ENCODE measurements at regions of chr18 and their contacts with region 1.

Region 1: DNA sequence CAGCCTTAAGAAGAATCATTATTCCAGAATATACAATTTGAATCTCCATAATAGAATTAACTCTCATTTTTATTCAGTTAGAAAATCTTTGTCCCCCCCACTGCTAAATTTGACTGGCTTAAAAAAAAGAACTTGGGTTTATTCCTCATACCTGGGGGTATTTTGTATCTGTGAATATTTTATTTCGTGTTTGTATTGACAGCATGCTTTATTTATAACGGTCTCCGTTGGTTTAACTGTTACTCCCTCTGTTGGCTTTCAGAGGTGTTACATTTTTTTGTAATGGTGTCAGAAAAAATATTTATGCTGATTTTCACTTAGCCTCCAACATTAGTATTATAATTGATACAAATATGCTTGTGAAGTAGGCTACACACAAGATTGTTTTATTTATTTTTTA is 109.1 kb downstream of the HAUS1 start:
- DNase-seq: no peak
- H3K4me3 Mint-ChIP-seq: no peak overlapping the region
- H3K27ac Mint-ChIP-seq: peak overlapping the region; percentile 37
- H3K4me1 Mint-ChIP-seq: peaks cover 59% of the 10 kb centered on the region
- H3K27me3 Mint-ChIP-seq: no peaks in the 10 kb centered on the region

Region 2: GRCh38 chr18:46028536-46028891 is 184.8 kb before region 1 on chr18:
- intact Hi-C with region 1: no loop called
- DNase-seq: no peak
- H3K4me3 Mint-ChIP-seq: peak overlapping the region; percentile 86
- H3K27ac Mint-ChIP-seq: peak overlapping the region; percentile 59
- H3K4me1 Mint-ChIP-seq: peaks cover 14% of the 10 kb centered on the region
- H3K27me3 Mint-ChIP-seq: peaks cover 21% of the 10 kb centered on the region

Region 3: GRCh38 chr18:46097801-46098615 is 115.3 kb before region 1 on chr18 and contains the start of gene ATP5F1A:
- intact Hi-C with region 1: loop called (anchors 2 kb)
- DNase-seq: peak; percentile 76
- H3K4me3 Mint-ChIP-seq: peak within 1 kb of the TSS; percentile 99
- H3K27ac Mint-ChIP-seq: peak within 1 kb of the TSS; percentile 99
- H3K4me1 Mint-ChIP-seq: peaks cover 23% of the 10 kb centered on the region
- H3K27me3 Mint-ChIP-seq: peaks cover 3% of the 10 kb centered on the region
- total RNA-seq, gene ATP5F1A: 412 and 420 TPM in 2 replicates

Region 4: GRCh38 chr18:46148810-46149209 is 64.5 kb before region 1 on chr18:
- intact Hi-C with region 1: loop called (anchors 1 kb)
- DNase-seq: peak; percentile 38
- H3K4me3 Mint-ChIP-seq: no peak overlapping the region
- H3K27ac Mint-ChIP-seq: peak overlapping the region; percentile 7
- H3K4me1 Mint-ChIP-seq: peaks cover 30% of the 10 kb centered on the region
- H3K27me3 Mint-ChIP-seq: peaks cover 2% of the 10 kb centered on the region

Region 5: GRCh38 chr18:46199515-46200147 is 13.7 kb before region 1 on chr18:
- intact Hi-C with region 1: loop called (anchors 2 kb)
- DNase-seq: no peak
- H3K4me3 Mint-ChIP-seq: no peak overlapping the region
- H3K27ac Mint-ChIP-seq: peak overlapping the region; percentile 78
- H3K4me1 Mint-ChIP-seq: peaks cover 50% of the 10 kb centered on the region
- H3K27me3 Mint-ChIP-seq: no peaks in the 10 kb centered on the region

Region 6: GRCh38 chr18:46264235-46264893 is 51.1 kb after region 1 on chr18:
- intact Hi-C with region 1: loop called (anchors 2 kb)
- DNase-seq: no peak
- H3K4me3 Mint-ChIP-seq: no peak overlapping the region
- H3K27ac Mint-ChIP-seq: peak overlapping the region; percentile 66
- H3K4me1 Mint-ChIP-seq: peaks cover 80% of the 10 kb centered on the region
- H3K27me3 Mint-ChIP-seq: no peaks in the 10 kb centered on the region